Naive thymus-derived CD4-positive, alpha-beta T cell (primary cell): ENCODE measurements at regions of chr12 and their contacts with region 1.

Region 1: GRCh38 chr12:123580772-123581171 is 3.6 kb upstream of the TMED2 start:
- DNase-seq: no peak
- ATAC-seq: no peak
- H3K4me3 ChIP-seq: no peak overlapping the region
- H3K4me3 Mint-ChIP-seq: no peak overlapping the region
- H3K27ac ChIP-seq: no peak overlapping the region
- H3K27ac Mint-ChIP-seq: peak overlapping the region in 4 of 9 donors; percentile 5 to 95 (median 44)
- H3K4me1 ChIP-seq: peaks cover 17 to 21% of the 10 kb centered on the region in 2 donors
- H3K4me1 Mint-ChIP-seq: peaks cover 20 to 30% (median 26%) of the 10 kb centered on the region in 7 donors
- H3K27me3 ChIP-seq: no peaks in the 10 kb centered on the region
- H3K27me3 Mint-ChIP-seq: no peaks in the 10 kb centered on the region

Region 2: GRCh38 chr12:122752464-122753318 is 828.1 kb before region 1 on chr12 and contains the start of gene DENR:
- CTCF ChIA-PET with region 1: no interaction called
- POLR2A ChIA-PET with region 1: no interaction called
- intact Hi-C with region 1: loop called in 1 of 2 experiments (anchors 5 kb)
- DNase-seq: peak; percentile 98 to 100 (median 99)
- ATAC-seq: peak; percentile 99
- H3K4me3 ChIP-seq: peak within 1 kb of the TSS; percentile 87
- H3K4me3 Mint-ChIP-seq: peak within 1 kb of the TSS; percentile 93 to 100 (median 96)
- H3K27ac ChIP-seq: peak within 1 kb of the TSS; percentile 94
- H3K27ac Mint-ChIP-seq: peak within 1 kb of the TSS; percentile 89 to 98 (median 96)
- H3K4me1 ChIP-seq: peaks cover 12 to 19% of the 10 kb centered on the region in 2 donors
- H3K4me1 Mint-ChIP-seq: peaks cover 31 to 70% (median 60%) of the 10 kb centered on the region in 7 donors
- H3K27me3 ChIP-seq: no peaks in the 10 kb centered on the region
- H3K27me3 Mint-ChIP-seq: no peaks in the 10 kb centered on the region
- total RNA-seq, gene DENR: 29.5 to 65.5 (median 46.1) TPM

Region 3: GRCh38 chr12:123043536-123044001 is 537.2 kb before region 1 on chr12:
- CTCF ChIA-PET with region 1: no interaction called
- POLR2A ChIA-PET with region 1: no interaction called
- intact Hi-C with region 1: loop called in 1 of 2 experiments (anchors 1 kb)
- DNase-seq: peak; percentile 36 to 83 (median 71)
- ATAC-seq: peak; percentile 92
- H3K4me3 ChIP-seq: no peak overlapping the region
- H3K4me3 Mint-ChIP-seq: peak overlapping the region in 9 of 10 donors; percentile 13 to 69 (median 56)
- H3K27ac ChIP-seq: peak overlapping the region; percentile 38
- H3K27ac Mint-ChIP-seq: peak overlapping the region; percentile 40 to 95 (median 84)
- H3K4me1 ChIP-seq: peaks cover 10 to 17% of the 10 kb centered on the region in 2 donors
- H3K4me1 Mint-ChIP-seq: peaks cover 27 to 65% (median 52%) of the 10 kb centered on the region in 7 donors
- H3K27me3 ChIP-seq: no peaks in the 10 kb centered on the region
- H3K27me3 Mint-ChIP-seq: no peaks in the 10 kb centered on the region

Region 4: GRCh38 chr12:123388177-123388947 is 192.4 kb before region 1 on chr12:
- CTCF ChIA-PET with region 1: interaction called, 6 read pairs
- POLR2A ChIA-PET with region 1: interaction called, 7 read pairs
- intact Hi-C with region 1: loop called (anchors 1 kb)
- DNase-seq: peak; percentile 64 to 84 (median 75)
- ATAC-seq: peak; percentile 75
- H3K4me3 ChIP-seq: peak overlapping the region; percentile 88
- H3K4me3 Mint-ChIP-seq: peak overlapping the region; percentile 78 to 91 (median 84)
- H3K27ac ChIP-seq: peak overlapping the region; percentile 79
- H3K27ac Mint-ChIP-seq: peak overlapping the region in 8 of 9 donors; percentile 47 to 93 (median 86)
- H3K4me1 ChIP-seq: peaks cover 11 to 13% of the 10 kb centered on the region in 2 donors
- H3K4me1 Mint-ChIP-seq: peaks cover 10 to 49% (median 43%) of the 10 kb centered on the region in 7 donors
- H3K27me3 ChIP-seq: no peaks in the 10 kb centered on the region
- H3K27me3 Mint-ChIP-seq: no peaks in the 10 kb centered on the region

Region 5: GRCh38 chr12:123427036-123427769 is 153.6 kb before region 1 on chr12:
- CTCF ChIA-PET with region 1: no interaction called
- POLR2A ChIA-PET with region 1: no interaction called
- intact Hi-C with region 1: no loop called
- DNase-seq: peak in 2 of 9 donors; percentile 8 to 30
- ATAC-seq: peak; percentile 85
- H3K4me3 ChIP-seq: no peak overlapping the region
- H3K4me3 Mint-ChIP-seq: peak overlapping the region in 1 of 10 donors; percentile 1
- H3K27ac ChIP-seq: peak overlapping the region; percentile 41
- H3K27ac Mint-ChIP-seq: peak overlapping the region in 6 of 9 donors; percentile 32 to 86 (median 43)
- H3K4me1 ChIP-seq: peaks cover 0 to 24% of the 10 kb centered on the region in 2 donors
- H3K4me1 Mint-ChIP-seq: peaks cover 0 to 27% (median 16%) of the 10 kb centered on the region in 7 donors
- H3K27me3 ChIP-seq: no peaks in the 10 kb centered on the region
- H3K27me3 Mint-ChIP-seq: no peaks in the 10 kb centered on the region

Region 6: DNA sequence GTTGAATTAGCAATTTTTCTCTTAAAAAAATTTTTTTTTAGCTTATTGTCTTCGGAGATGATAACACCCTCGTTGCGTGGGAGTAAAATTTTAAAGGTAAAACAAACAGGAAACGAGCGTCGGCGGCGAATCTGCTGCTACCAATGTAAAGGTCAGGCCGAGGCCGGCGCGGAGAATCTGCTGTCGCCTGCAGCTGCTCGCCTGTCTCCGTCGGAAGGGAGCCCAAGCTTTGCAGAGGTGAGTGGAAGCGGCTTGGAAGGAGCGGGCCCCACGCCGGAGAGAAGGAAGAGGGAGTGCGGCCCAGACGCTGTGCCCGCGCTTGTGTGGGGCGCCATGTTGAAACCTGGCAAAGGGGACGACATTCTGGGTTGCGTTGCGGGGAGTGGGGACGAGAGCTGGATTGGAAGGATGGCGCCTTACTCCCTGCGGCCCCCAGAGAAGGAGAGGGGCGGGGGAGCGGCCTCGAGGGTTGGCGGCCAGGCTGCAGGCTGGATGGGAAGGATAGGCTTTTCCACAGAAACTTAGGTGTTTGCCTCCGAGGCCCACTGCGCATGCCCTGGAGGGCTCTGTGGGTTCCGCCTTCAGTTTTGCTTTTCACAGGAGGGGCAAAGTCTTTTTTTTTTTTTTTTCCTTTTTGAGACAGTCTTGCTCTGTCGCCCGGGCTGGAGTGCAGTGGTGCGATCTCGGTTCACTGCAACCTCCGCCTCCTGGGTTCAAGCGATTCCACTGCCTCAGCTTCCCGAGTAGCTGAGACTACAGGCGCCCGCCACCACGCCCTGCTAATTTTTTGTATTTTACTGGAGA is 122.6 kb before region 1 on chr12 and contains the start of gene SNRNP35:
- CTCF ChIA-PET with region 1: no interaction called
- POLR2A ChIA-PET with region 1: no interaction called
- intact Hi-C with region 1: loop called (anchors 1 kb)
- DNase-seq: peak; percentile 79 to 92 (median 88)
- ATAC-seq: peak; percentile 85
- H3K4me3 ChIP-seq: peak within 1 kb of the TSS; percentile 97
- H3K4me3 Mint-ChIP-seq: peak within 1 kb of the TSS; percentile 92 to 100 (median 99)
- H3K27ac ChIP-seq: peak within 1 kb of the TSS; percentile 99
- H3K27ac Mint-ChIP-seq: peak within 1 kb of the TSS; percentile 100
- H3K4me1 ChIP-seq: peaks cover 14 to 18% of the 10 kb centered on the region in 2 donors
- H3K4me1 Mint-ChIP-seq: peaks cover 21 to 45% (median 26%) of the 10 kb centered on the region in 7 donors
- H3K27me3 ChIP-seq: no peaks in the 10 kb centered on the region
- H3K27me3 Mint-ChIP-seq: no peaks in the 10 kb centered on the region
- total RNA-seq, gene SNRNP35: 30.2 to 53.4 (median 35.8) TPM

Region 7: DNA sequence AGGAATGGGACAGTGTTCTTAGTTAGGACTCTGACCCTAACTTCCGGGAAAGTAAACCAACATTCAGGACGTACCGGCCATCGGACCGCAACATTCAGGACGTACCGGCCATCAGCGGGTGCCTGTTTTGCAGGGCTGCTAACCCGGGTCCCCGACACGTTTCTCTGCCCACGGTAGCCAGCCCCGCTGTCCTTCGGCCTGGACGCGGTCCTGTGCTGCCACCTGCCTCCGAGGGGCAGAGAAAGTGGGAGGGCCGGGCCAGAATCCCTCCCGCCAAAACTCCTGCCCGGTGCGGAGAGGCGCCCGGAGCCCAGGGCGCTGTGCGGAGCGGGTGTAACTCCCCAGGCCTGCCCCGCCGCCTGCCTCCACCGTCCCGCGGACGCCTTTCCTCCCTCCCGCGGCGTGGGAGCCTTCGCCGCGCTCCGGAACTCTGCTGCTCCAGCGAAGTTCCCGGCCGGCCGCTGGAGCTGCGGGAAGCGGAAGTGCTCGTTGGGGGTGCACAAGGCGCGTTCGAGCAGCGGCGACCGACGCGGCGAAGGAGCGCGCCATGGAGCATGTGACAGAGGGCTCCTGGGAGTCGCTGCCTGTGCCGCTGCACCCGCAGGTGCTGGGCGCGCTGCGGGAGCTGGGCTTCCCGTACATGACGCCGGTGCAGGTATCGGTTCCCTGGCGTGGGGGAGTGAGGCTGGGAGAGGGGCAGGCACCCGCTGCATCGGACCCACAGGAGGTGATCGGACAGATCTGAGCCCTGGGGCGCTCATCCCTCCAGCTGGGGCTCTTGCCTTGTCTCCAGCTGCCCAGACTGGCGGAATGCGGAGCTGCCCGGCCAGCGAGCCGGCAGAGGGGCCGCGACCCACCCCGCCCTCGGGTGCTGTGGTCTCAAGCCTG is 21.1 kb after region 1 on chr12 and contains the start of gene DDX55:
- CTCF ChIA-PET with region 1: no interaction called
- POLR2A ChIA-PET with region 1: no interaction called
- intact Hi-C with region 1: loop called (anchors 1 kb)
- DNase-seq: peak; percentile 77 to 87 (median 86)
- ATAC-seq: peak; percentile 96
- H3K4me3 ChIP-seq: peak within 1 kb of the TSS; percentile 99
- H3K4me3 Mint-ChIP-seq: peak within 1 kb of the TSS; percentile 89 to 99 (median 97)
- H3K27ac ChIP-seq: peak within 1 kb of the TSS; percentile 84
- H3K27ac Mint-ChIP-seq: peak within 1 kb of the TSS; percentile 83 to 98 (median 93)
- H3K4me1 ChIP-seq: peaks cover 4 to 8% of the 10 kb centered on the region in 2 donors
- H3K4me1 Mint-ChIP-seq: peaks cover 11 to 47% (median 30%) of the 10 kb centered on the region in 7 donors
- H3K27me3 ChIP-seq: no peaks in the 10 kb centered on the region
- H3K27me3 Mint-ChIP-seq: no peaks in the 10 kb centered on the region
- total RNA-seq, gene DDX55: 26.0 to 54.0 (median 43.4) TPM

Region 8: DNA sequence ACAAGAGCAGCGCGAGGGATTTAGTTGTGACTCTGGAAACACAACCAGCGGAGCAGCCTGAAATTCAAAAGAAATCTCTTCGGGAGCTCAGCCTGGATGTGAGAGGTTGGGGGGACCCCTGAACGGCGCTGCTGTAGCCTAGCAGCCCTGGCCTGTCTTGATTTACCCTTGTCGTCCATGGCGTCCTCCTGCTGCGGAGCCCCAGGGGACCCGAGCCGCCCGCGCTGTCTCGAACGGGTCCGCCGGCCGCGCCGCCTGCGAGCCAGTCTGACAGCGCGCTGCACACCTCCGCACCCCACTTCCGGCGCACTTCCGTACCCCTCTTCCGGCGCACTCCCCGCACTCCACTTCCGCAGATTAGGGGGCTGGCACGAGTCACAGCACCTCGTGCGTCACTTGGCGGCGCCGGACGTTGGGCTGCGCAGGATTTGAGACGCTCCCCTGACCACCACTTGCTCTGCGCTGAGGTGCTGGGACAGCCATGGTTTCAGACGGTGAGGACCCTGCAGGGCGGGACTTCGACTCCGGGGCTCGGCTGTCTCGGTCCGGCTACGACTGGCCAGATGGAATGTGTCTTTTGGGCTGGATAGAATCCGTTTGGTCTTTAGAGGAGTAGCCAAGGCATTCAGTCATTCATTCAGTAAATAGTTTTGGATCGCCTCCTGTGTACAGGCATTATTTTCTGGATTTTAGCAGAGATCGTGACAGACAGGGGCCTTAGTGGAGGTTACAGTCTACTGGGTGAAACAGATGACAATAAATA is 52.8 kb after region 1 on chr12 and contains the starts of genes EIF2B1 and GTF2H3:
- CTCF ChIA-PET with region 1: no interaction called
- POLR2A ChIA-PET with region 1: interaction called, 3 read pairs
- intact Hi-C with region 1: loop called (anchors 1 kb)
- DNase-seq: peak; percentile 83 to 96 (median 94)
- ATAC-seq: peak; percentile 98
- H3K4me3 ChIP-seq: peak within 1 kb of the TSS; percentile 85
- H3K4me3 Mint-ChIP-seq: peak within 1 kb of the TSS; percentile 89 to 100 (median 96)
- H3K27ac ChIP-seq: peak within 1 kb of the TSS; percentile 91
- H3K27ac Mint-ChIP-seq: peak within 1 kb of the TSS; percentile 91 to 99 (median 96)
- H3K4me1 ChIP-seq: peaks cover 11 to 16% of the 10 kb centered on the region in 2 donors
- H3K4me1 Mint-ChIP-seq: peaks cover 21 to 54% (median 43%) of the 10 kb centered on the region in 7 donors
- H3K27me3 ChIP-seq: no peaks in the 10 kb centered on the region
- H3K27me3 Mint-ChIP-seq: no peaks in the 10 kb centered on the region
- total RNA-seq, gene EIF2B1: 44.0 to 64.3 (median 49.5) TPM
- total RNA-seq, gene GTF2H3: 21.4 to 39.7 (median 27.7) TPM

Region 9: GRCh38 chr12:123813349-123813748 is 232.6 kb after region 1 on chr12:
- CTCF ChIA-PET with region 1: no interaction called
- POLR2A ChIA-PET with region 1: no interaction called
- intact Hi-C with region 1: no loop called
- DNase-seq: no peak
- ATAC-seq: no peak
- H3K4me3 ChIP-seq: no peak overlapping the region
- H3K4me3 Mint-ChIP-seq: no peak overlapping the region
- H3K27ac ChIP-seq: no peak overlapping the region
- H3K27ac Mint-ChIP-seq: no peak overlapping the region
- H3K4me1 ChIP-seq: no peaks in the 10 kb centered on the region
- H3K4me1 Mint-ChIP-seq: no peaks in the 10 kb centered on the region
- H3K27me3 ChIP-seq: no peaks in the 10 kb centered on the region
- H3K27me3 Mint-ChIP-seq: peaks cover 0 to 11% (median 5%) of the 10 kb centered on the region in 5 donors